ENCODE measurements at regions of chr2 and their contacts with region 1.

Region 1: DNA sequence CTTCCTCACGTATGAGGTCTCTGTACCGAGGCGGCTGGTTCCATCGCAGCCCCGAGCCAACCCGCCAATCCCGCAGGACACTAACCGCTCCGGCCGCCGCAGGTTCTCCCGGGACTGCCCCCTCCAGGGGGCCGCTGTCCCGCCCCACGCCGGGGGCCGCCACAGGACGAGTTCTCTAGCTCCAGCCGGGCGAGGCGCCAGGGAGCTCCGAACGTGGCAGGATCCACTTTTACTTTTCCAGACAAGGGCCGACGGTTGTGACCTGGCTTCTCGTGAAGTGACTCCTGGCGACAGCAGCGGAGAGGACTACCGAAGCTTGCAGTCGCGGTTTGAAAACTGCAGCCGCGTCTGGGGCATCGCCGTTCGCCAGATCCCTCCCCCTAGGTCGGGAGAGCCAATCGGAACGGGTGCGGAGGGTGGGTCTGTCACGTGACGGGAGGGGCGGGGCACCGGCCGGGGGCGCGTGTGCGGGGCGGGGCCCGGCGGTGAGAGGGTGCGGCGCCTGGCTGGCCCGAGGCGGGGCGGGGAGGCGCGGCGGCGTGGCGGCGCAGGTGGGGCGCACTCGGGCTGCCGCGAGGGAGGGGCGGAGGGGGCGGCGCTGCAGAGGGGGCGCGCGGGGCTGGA is at the start of gene STK17B:
- DNase-seq: peak; percentile 88
- ATAC-seq: peak; percentile 64
- H3K4me3 Mint-ChIP-seq: peak within 1 kb of the TSS; percentile 99
- H3K27ac Mint-ChIP-seq: peak within 1 kb of the TSS; percentile 98
- H3K4me1 Mint-ChIP-seq: peaks cover 60% of the 10 kb centered on the region
- H3K27me3 Mint-ChIP-seq: no peaks in the 10 kb centered on the region
- CTCF ChIP-seq: no peak
- total RNA-seq, gene STK17B: 203 and 226 TPM in 2 replicates

Region 2: DNA sequence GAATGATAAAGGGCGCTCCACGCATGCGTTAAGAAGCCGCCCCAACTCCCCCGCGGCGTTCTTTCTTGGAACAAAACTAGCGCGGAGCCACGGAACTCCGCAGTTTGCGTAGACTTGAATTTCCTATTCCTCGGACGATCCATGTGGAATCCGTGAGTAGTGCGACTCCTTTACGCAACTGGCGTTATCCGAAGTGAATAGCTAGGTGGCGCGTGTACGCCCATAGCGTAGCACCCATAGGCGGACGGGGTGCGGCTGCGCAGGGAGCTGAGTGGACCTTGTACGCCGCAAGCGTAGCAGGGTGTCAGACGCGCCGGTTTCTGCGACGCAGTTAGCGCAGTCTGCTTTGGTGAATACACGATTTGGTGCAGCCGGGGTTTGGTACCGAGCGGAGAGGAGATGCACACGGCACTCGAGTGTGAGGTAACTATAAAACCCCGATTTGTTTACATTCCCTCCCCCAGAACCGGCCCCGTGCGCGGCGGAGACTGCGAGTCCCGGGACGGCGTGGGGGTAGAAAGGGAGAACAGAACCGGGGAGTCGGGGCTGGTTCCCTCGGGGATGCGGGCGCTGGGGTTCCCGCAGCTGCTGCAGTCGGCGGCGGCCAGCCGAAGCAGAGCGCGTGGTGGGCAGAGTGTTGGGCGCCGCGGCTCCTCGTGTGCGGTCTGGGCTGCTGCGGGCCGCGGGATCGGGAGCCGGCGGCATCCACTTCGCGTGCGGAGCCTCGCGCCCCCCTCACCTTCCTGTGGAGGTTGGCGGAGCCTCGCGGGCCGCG is 514.3 kb before region 1 on chr2 and contains the start of gene SLC39A10:
- CTCF ChIA-PET with region 1: no interaction called
- POLR2A ChIA-PET with region 1: interaction called, 6 read pairs
- intact Hi-C with region 1: loop called (anchors 5 kb)
- DNase-seq: peak; percentile 97
- ATAC-seq: peak; percentile 84
- H3K4me3 Mint-ChIP-seq: peak within 1 kb of the TSS; percentile 98
- H3K27ac Mint-ChIP-seq: peak within 1 kb of the TSS; percentile 99
- H3K4me1 Mint-ChIP-seq: peaks cover 64% of the 10 kb centered on the region
- H3K27me3 Mint-ChIP-seq: no peaks in the 10 kb centered on the region
- CTCF ChIP-seq: no peak
- total RNA-seq, gene SLC39A10: 45.7 and 52.3 TPM in 2 replicates

Region 3: GRCh38 chr2:195930082-195930481 is 241.3 kb before region 1 on chr2:
- CTCF ChIA-PET with region 1: no interaction called
- POLR2A ChIA-PET with region 1: no interaction called
- intact Hi-C with region 1: no loop called
- DNase-seq: no peak
- ATAC-seq: no peak
- H3K4me3 Mint-ChIP-seq: no peak overlapping the region
- H3K27ac Mint-ChIP-seq: no peak overlapping the region
- H3K4me1 Mint-ChIP-seq: no peaks in the 10 kb centered on the region
- H3K27me3 Mint-ChIP-seq: no peaks in the 10 kb centered on the region
- CTCF ChIP-seq: no peak

Region 4: GRCh38 chr2:196143730-196144131 is 27.6 kb before region 1 on chr2:
- CTCF ChIA-PET with region 1: interaction called, 3 read pairs
- POLR2A ChIA-PET with region 1: interaction called, 18 read pairs
- intact Hi-C with region 1: no loop called
- DNase-seq: no peak
- ATAC-seq: no peak
- H3K4me3 Mint-ChIP-seq: no peak overlapping the region
- H3K27ac Mint-ChIP-seq: peak overlapping the region; percentile 62
- H3K4me1 Mint-ChIP-seq: peaks cover 54% of the 10 kb centered on the region
- H3K27me3 Mint-ChIP-seq: no peaks in the 10 kb centered on the region
- CTCF ChIP-seq: no peak

Region 5: DNA sequence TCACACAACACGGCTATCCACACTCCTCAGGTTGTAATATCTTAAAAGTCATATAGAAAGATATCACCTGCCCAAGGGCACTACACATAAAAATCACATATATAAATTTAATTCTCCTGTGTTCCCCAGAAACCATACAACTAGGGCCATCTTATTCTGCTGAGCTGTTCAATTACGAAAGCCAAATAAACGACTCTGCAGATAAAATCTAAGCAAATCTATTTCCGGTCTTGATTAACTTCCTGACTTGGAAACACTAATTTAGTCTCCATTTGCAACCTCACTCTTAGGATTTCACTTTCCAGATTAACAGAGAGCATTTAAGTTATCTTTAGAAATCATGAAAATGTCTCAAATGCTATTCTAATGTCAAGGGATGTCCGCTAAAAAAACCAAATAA is 23.9 kb after region 1 on chr2:
- CTCF ChIA-PET with region 1: interaction called, 3 read pairs
- POLR2A ChIA-PET with region 1: interaction called, 45 read pairs
- intact Hi-C with region 1: no loop called
- DNase-seq: no peak
- ATAC-seq: no peak
- H3K4me3 Mint-ChIP-seq: peak overlapping the region; percentile 4
- H3K27ac Mint-ChIP-seq: no peak overlapping the region
- H3K4me1 Mint-ChIP-seq: peaks cover 20% of the 10 kb centered on the region
- H3K27me3 Mint-ChIP-seq: no peaks in the 10 kb centered on the region
- CTCF ChIP-seq: no peak

Region 6: DNA sequence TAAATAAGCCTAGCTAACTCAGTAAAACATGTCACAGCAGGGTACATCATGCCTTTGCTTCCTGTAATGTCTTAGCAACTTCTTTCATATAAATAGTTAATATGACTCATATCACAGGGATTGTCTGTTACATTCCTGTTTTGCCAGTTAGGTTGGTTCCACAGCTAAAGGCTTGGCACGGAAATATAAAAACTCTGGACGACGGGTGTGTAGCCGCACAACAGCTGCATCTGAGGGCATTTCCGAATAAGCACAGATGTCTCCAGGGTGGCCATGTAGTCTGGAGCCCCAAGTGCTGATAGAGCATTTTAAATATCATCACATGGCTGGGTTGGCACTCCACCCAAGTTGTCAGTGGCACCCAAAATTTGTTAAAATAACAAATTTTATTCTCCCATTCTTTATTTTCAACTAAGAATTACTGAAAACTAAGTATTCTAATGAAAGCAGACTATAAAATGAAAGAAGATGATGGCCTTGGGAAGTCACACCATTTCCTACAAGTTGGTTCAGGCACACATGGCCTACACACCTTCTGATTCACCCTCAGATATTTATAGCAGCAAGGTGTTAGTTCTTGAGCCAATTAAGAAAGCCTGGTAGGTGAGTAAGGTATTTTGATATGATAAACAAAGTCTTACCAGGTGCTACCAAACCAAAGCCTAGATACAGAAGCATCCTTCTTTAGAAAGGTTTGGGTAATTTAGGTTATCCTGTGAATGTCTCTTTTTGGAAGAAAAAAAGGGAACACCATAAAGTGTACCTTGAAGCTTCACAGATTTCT is 61.9 kb after region 1 on chr2:
- CTCF ChIA-PET with region 1: interaction called, 7 read pairs
- POLR2A ChIA-PET with region 1: interaction called, 543 read pairs
- intact Hi-C with region 1: loop called (anchors 2 kb)
- DNase-seq: no peak
- ATAC-seq: peak; percentile 15
- H3K4me3 Mint-ChIP-seq: peak overlapping the region; percentile 24
- H3K27ac Mint-ChIP-seq: peak overlapping the region; percentile 91
- H3K4me1 Mint-ChIP-seq: peaks cover 81% of the 10 kb centered on the region
- H3K27me3 Mint-ChIP-seq: no peaks in the 10 kb centered on the region
- CTCF ChIP-seq: no peak

Region 7: DNA sequence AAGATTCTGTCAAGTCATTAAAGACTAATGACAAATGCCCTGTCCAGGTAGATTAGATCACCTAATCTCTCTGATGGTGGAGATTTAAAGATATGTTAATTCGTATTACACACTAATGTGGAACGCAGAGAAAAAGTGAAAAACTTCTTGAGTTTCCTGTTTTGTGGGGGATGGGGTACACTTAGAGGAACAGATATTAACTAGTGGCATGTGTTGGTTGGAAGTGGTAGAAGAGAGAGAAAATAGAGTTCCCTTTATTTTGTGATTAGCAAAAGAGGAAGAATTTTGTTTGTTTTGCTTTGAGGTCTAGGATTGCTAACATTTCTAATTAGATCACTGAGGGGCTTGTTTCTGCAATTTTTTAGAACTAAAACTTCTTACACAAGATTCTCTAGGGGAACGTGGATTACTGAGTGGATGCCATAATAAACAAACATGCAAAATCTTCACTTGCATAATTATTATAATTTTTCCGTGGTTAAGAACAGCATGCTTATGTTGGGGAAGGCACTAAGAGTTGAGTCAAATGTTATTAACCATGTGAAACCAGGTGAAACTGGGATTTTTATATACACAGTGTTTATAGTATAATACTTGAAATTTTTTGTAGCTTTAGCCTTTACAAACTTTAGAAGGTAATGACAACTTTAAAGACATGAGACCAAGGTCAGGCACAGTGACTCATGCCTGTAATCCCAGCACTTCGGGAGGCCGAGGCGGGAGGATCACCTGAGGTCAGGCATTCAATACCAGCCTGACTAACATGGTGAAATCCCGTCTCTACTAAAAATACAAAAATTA is 97.4 kb after region 1 on chr2:
- CTCF ChIA-PET with region 1: no interaction called
- POLR2A ChIA-PET with region 1: interaction called, 114 read pairs
- intact Hi-C with region 1: no loop called
- DNase-seq: no peak
- ATAC-seq: peak; percentile 73
- H3K4me3 Mint-ChIP-seq: peak overlapping the region; percentile 67
- H3K27ac Mint-ChIP-seq: peak overlapping the region; percentile 88
- H3K4me1 Mint-ChIP-seq: peaks cover 64% of the 10 kb centered on the region
- H3K27me3 Mint-ChIP-seq: no peaks in the 10 kb centered on the region
- CTCF ChIP-seq: no peak

Region 8: GRCh38 chr2:196544906-196545433 is 373.6 kb after region 1 on chr2:
- CTCF ChIA-PET with region 1: no interaction called
- POLR2A ChIA-PET with region 1: no interaction called
- intact Hi-C with region 1: no loop called
- DNase-seq: no peak
- ATAC-seq: no peak
- H3K4me3 Mint-ChIP-seq: no peak overlapping the region
- H3K27ac Mint-ChIP-seq: no peak overlapping the region
- H3K4me1 Mint-ChIP-seq: no peaks in the 10 kb centered on the region
- H3K27me3 Mint-ChIP-seq: peaks cover 21% of the 10 kb centered on the region
- CTCF ChIP-seq: no peak

Region 9: GRCh38 chr2:197293252-197294007 is 1122.1 kb after region 1 on chr2:
- CTCF ChIA-PET with region 1: no interaction called
- POLR2A ChIA-PET with region 1: interaction called, 3 read pairs
- intact Hi-C with region 1: loop called (anchors 10 kb)
- DNase-seq: no peak
- ATAC-seq: peak; percentile 41
- H3K4me3 Mint-ChIP-seq: peak overlapping the region; percentile 78
- H3K27ac Mint-ChIP-seq: peak overlapping the region; percentile 96
- H3K4me1 Mint-ChIP-seq: peaks cover 91% of the 10 kb centered on the region
- H3K27me3 Mint-ChIP-seq: no peaks in the 10 kb centered on the region
- CTCF ChIP-seq: no peak